Motor neuron (in vitro differentiated cells): ENCODE measurements at regions of chr9 and their contacts with region 1.

Region 1: DNA sequence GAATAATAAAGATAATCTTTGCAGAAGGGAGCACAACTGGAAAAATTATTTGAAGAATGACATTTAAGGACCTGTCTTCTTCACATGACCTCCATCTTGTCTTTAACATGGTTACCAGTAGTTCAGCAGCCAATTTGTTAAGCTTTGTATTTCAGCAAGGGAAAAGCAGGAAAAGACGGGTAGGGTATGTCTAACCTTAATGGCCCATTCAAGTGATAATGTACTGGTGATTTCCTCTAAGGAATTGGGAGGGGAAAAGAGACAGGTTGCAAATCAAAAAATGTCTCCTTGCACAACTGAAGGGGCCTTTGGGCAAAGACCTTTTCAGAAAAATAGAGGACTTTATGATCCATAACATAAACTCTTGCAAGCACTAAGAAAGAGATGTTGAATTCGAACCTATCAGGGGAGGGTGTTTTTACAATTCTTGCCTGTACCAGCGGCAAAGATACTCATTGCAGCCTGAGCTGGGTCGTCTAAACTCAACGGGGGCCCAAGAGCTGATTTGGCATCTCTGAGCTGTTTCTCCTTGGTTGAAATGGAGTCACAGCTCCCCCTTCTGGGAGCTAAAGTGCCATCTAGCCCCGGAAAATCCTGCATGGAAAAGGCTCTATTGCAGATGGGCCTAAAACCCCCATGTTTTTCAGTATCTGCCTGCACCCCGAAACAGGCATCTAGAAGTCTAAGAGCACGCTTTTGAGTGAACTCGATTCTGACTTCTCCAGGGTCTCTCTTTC is 3.8 kb downstream of the BRINP1 start:
- ATAC-seq: peak in 3 of 8 experiments; percentile 6 to 43 (median 6)
- H3K4me3 ChIP-seq: peak overlapping the region in 1 of 5 donors; percentile 10
- H3K27ac ChIP-seq: no peak overlapping the region
- H3K4me1 ChIP-seq: peaks cover 8 to 9% of the 10 kb centered on the region in 2 donors

Region 2: DNA sequence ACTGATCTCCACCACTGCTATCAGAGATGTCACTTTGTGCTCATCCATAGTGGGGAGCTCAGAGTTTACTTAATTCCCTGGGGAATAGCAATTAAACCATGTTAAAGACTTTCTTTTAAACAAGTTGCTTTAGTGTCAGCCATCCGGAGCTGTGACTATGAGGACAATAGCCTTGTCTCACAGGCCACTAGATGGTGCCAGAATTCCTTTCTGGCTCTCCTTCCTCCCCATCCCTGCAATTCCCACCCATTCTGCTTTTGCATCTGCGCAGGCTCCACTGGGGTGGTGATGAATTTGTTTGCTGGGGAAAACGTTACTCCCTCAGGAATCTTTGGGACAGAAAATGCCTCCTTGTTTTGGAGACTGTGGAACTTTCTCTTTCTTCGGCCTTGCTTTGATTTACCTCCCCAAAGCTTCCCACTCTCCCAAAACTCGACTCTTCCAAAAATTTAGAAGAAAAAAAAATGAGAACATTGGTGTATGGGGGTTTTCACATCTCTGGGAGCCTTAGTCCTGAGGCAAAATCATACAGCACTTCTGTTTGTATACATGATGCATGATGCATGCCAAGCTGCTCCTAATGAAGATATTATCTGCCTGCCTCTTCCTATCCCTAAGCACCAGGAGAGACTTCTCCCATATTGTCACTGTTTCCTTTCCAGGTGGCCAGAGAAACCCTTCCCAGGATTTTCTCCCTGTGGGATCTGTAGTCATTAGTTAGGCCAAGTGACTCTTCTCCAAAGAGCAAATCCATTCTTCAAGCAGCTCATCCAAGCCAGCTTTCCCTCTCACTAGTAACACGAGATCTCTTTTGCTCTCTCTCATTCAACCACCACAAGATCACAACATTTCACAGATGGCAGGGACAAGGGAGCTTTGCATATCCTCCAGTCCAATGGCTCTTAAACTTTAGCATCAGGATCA is 1195.2 kb before region 1 on chr9:
- in situ Hi-C with region 1: loop called in 2 of 9 experiments (anchors 25 kb)
- ATAC-seq: peak; percentile 69 to 98 (median 88)
- H3K4me3 ChIP-seq: no peak overlapping the region
- H3K27ac ChIP-seq: no peak overlapping the region
- H3K4me1 ChIP-seq: peaks cover 4 to 5% of the 10 kb centered on the region in 2 donors

Region 3: DNA sequence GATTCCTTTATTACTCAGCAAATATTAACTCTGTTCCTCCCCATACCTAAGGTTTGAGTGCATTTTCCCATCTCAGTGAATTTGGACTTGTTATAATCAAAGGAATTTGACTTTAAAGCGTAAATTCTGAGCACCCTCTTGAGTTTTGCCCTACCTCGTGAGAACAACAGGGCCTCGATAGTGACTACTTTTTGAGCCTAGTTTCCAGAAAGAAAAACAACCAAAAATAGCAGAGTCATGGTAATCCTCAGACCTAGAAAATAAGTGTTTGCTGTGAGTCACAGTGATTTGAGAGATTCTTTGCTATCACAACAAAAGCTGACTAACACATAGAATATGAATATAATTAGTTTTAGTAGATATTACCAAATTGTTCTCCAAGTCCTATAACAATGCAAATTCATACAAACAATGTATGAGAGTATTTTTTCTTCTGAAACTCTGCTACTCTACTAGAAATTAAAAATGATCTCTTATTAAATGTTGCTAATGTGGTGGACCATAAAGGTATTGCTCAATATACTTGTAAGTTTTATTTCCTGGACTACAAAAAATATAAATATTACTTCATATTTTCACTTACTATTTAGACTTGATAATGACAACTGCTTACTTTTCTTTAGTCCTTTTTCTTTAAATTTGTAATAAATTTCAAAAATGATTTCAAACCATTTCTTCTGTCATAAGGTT is 756.0 kb before region 1 on chr9:
- in situ Hi-C with region 1: loop called in 1 of 9 experiments (anchors 25 kb)
- ATAC-seq: peak in 2 of 8 experiments; percentile 57 to 66
- H3K4me3 ChIP-seq: no peak overlapping the region
- H3K27ac ChIP-seq: no peak overlapping the region
- H3K4me1 ChIP-seq: no peaks in the 10 kb centered on the region

Region 4: DNA sequence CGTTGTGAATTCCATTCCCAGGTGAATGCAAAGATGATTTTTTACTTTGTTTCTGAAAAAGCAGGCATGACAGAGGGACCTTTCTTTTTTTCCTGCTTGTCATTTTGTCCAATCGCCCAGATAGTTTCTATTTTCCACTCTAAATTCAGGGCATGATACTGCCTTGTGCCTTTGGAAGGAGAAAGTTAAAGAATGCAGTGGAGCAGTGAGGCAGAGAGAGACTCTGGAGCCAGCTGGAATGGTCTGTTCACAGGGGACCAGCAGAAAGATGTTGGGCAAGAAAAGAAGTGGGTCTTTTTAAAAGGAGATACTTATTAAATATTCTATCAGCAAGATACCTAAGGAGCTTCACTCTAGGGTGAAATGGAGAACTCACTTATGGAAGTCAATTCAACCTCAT is 528.6 kb before region 1 on chr9:
- in situ Hi-C with region 1: loop called in 2 of 9 experiments (anchors 10 to 25 kb)
- ATAC-seq: no peak
- H3K4me3 ChIP-seq: no peak overlapping the region
- H3K27ac ChIP-seq: no peak overlapping the region
- H3K4me1 ChIP-seq: peaks cover 0 to 3% of the 10 kb centered on the region in 2 donors

Region 5: GRCh38 chr9:118957585-118957984 is 407.9 kb before region 1 on chr9:
- in situ Hi-C with region 1: no loop called
- ATAC-seq: no peak
- H3K4me3 ChIP-seq: no peak overlapping the region
- H3K27ac ChIP-seq: no peak overlapping the region
- H3K4me1 ChIP-seq: no peaks in the 10 kb centered on the region

Region 6: DNA sequence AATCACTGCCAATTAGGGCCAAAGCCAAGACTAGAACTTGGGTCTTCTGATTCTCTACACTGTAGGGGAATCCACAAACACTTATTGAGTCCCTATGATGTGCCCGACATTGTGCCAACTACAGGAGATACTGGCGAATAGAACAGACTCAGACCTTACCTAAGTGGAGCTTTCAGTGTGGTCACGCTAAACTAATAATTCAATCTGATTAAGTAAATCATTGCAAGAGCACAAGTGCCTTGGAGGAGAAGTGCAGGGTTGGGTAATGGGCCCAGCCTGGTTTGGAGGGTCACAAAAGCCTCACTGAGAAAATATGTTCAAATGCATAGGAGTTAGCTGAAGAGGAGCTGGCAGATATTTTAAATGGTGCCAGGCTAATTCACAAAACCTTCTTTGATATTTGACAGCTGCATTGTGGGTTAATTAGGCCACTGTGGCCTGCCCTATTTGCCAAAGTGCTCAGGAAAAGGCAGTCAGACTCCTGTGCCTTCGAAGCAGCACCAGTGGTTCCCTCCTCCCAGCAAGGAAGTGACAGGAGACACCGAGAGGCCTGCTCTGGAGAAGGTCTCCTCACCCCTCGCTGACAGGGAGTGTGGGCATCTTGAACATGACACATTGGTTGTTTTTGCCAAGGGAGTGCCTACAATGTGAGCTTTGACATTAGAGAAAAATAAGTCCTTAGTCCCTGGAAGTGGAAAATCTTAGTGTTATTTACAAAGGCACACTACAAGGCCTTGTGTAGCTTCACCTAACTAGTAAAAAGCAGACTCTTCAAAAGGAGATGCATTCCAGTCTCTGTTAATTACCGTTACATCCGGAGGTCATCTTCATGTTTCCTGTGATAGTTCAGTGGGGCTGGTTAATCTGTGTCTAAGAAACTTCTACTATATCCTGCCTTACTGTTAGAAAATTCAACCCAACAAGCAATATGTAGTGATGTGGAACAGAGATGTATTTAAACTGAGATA is 1585.2 kb after region 1 on chr9:
- in situ Hi-C with region 1: no loop called
- ATAC-seq: no peak
- H3K4me3 ChIP-seq: no peak overlapping the region
- H3K27ac ChIP-seq: no peak overlapping the region
- H3K4me1 ChIP-seq: peaks cover 0 to 5% of the 10 kb centered on the region in 2 donors